ENCODE measurements at regions of chr18 and their contacts with region 1.

Region 1: GRCh38 chr18:13268158-13269012 is 49.8 kb downstream of the LDLRAD4 start:
- DNase-seq: peak in 3 of 5 donors; percentile 21 to 55 (median 45)
- ATAC-seq: no peak
- H3K4me3 ChIP-seq: peak overlapping the region in 1 of 12 donors; percentile 10
- H3K27ac ChIP-seq: peak overlapping the region; percentile 6 to 86 (median 72)
- H3K4me1 ChIP-seq: peaks cover 8 to 100% (median 82%) of the 10 kb centered on the region in 12 donors
- H3K27me3 ChIP-seq: no peaks in the 10 kb centered on the region
- CTCF ChIP-seq: no peak
- POLR2A ChIP-seq: no peak

Region 2: DNA sequence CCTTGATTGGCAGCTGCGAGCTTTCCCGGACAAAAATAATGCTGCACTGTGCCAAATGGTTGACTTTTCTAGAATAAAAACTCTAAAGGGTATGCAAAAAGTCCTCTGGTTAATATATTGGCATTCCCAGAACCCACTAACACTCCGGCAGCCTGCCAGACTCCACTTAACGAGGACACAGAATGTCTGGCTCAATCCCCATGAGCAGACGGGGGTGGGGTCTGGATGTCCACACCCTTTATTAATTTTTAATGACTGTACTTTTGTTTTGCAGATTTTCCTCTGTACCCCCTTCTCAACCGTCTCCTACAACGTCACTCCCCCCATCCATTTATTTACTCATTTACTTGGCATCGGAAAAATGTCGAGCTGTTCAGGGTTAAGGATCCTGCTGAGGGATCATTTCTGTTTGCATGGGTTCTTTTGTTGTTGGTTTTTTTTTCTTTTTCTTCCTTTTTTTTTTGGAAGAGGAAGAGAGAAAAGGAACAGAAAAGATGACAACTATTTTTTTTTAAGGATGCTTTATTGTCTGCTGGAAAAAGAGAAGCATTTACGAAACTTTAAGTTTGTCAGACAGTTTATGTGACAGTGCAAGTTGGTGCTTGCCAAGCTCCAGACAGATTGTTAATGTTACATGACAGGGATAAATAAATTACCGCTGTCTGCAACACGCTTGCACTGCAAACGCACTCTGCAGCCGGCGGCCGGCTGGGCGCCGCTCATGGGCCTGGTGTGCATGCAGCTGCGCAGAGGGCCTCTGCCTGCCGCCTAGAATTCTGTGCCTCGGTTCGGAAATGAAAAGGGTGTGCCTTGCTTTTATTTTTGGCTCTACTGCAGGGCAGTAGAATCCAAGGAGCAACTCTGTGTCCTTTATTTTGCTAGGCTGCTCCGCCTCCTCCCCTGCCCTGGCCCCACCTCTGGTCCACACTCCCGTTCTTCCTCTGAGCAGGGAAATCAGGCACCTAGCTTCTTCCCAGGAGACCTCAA is 46.2 kb before region 1 on chr18:
- intact Hi-C with region 1: loop called (anchors 2 to 10 kb)
- DNase-seq: peak; percentile 77 to 90 (median 84)
- ATAC-seq: peak; percentile 33 to 68 (median 59)
- H3K4me3 ChIP-seq: peak overlapping the region in 10 of 12 donors; percentile 15 to 38 (median 20)
- H3K27ac ChIP-seq: peak overlapping the region; percentile 70 to 95 (median 91)
- H3K4me1 ChIP-seq: peaks cover 14 to 69% (median 58%) of the 10 kb centered on the region in 12 donors
- H3K27me3 ChIP-seq: no peaks in the 10 kb centered on the region
- CTCF ChIP-seq: no peak
- POLR2A ChIP-seq: no peak

Region 3: DNA sequence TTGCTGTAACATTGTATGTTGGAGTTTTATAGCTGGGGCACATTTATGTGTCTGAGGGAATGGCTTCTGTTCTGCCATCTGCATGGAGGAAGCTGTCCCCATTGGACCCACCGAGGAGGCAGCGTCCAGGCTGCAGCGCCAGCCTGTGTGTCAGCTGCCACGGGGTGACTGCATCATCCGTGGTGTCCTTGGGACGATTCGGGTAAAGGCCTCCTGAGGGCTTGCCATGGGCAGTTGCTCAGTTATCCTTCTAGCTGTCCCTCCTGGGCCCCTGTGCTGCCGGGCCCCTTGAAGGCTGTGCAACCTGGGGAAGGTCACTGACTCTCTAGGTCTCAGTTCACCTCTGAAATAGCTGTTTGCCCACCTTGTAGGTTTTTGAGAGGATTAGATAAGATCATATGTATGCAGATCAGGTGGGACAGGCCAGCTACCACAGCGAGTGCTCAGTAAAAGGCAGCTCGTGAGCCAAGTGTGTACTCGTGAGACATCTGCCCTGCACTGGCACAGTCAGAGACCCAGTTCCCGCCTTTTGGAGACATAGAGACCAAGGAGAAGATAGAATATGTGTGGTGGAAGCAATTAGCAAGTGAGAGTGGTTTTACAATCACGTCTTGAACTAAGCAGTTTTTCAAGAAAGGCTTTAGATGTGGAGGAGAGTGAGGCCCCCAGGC is 39.2 kb before region 1 on chr18:
- intact Hi-C with region 1: loop called in 7 of 10 experiments (anchors 5 to 10 kb)
- DNase-seq: no peak
- ATAC-seq: no peak
- H3K4me3 ChIP-seq: no peak overlapping the region
- H3K27ac ChIP-seq: peak overlapping the region in 2 of 12 donors; percentile 7 to 15
- H3K4me1 ChIP-seq: peaks cover 9 to 53% (median 29%) of the 10 kb centered on the region in 12 donors
- H3K27me3 ChIP-seq: no peaks in the 10 kb centered on the region
- CTCF ChIP-seq: no peak
- POLR2A ChIP-seq: no peak

Region 4: GRCh38 chr18:13321923-13322322 is 53.5 kb after region 1 on chr18:
- intact Hi-C with region 1: no loop called
- DNase-seq: no peak
- ATAC-seq: no peak
- H3K4me3 ChIP-seq: no peak overlapping the region
- H3K27ac ChIP-seq: no peak overlapping the region
- H3K4me1 ChIP-seq: peaks cover 0 to 28% (median 9%) of the 10 kb centered on the region in 12 donors
- H3K27me3 ChIP-seq: no peaks in the 10 kb centered on the region
- CTCF ChIP-seq: no peak
- POLR2A ChIP-seq: no peak

Region 5: GRCh38 chr18:13416208-13416607 is 147.8 kb after region 1 on chr18:
- intact Hi-C with region 1: loop called in 1 of 10 experiments (anchors 10 kb)
- DNase-seq: no peak
- ATAC-seq: peak; percentile 17 to 68 (median 34)
- H3K4me3 ChIP-seq: no peak overlapping the region
- H3K27ac ChIP-seq: peak overlapping the region in 9 of 12 donors; percentile 1 to 70 (median 50)
- H3K4me1 ChIP-seq: peaks cover 7 to 65% (median 46%) of the 10 kb centered on the region in 12 donors
- H3K27me3 ChIP-seq: no peaks in the 10 kb centered on the region
- CTCF ChIP-seq: no peak
- POLR2A ChIP-seq: no peak

Region 6: DNA sequence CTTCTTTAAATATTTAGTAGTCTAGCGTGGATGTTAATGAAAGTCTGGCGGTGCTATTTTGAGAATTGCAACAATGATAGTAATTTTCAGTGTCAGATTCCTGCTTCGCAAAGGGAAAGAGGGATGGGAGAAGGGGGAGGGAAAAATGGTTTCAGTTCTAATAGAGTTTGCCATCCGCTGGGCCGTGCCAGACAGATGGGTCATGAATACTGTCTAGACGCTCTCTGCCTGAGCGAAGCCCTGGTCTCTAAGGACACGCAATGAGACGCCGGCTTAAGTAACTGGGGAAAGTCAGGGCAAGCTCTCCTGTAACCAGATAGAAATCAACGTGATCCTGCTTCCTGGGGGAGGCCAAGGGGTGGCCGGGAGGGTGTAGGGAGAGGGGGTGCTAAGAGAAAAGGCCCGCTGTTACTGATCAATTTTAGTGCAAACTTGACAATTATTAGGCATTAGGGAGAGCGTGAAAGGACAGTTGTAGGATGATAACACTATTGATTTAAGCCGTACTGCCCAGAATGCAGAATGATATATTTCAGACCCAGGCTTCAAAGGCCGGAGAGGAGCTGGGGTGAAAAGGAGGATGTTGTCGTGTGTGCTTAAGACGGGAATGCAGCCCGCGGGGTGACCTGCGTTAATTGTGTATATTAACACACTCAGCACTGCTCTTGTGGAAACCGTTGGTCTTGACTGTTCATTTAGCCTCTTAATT is 179.4 kb after region 1 on chr18:
- intact Hi-C with region 1: loop called in 1 of 10 experiments (anchors 10 kb)
- DNase-seq: peak in 3 of 5 donors; percentile 49 to 63 (median 58)
- ATAC-seq: peak in 3 of 4 donors; percentile 31 to 59 (median 39)
- H3K4me3 ChIP-seq: peak overlapping the region in 2 of 12 donors; percentile 0 to 22
- H3K27ac ChIP-seq: peak overlapping the region in 3 of 12 donors; percentile 12 to 51 (median 32)
- H3K4me1 ChIP-seq: peaks cover 0 to 57% (median 27%) of the 10 kb centered on the region in 12 donors
- H3K27me3 ChIP-seq: no peaks in the 10 kb centered on the region
- CTCF ChIP-seq: no peak
- POLR2A ChIP-seq: no peak

Region 7: DNA sequence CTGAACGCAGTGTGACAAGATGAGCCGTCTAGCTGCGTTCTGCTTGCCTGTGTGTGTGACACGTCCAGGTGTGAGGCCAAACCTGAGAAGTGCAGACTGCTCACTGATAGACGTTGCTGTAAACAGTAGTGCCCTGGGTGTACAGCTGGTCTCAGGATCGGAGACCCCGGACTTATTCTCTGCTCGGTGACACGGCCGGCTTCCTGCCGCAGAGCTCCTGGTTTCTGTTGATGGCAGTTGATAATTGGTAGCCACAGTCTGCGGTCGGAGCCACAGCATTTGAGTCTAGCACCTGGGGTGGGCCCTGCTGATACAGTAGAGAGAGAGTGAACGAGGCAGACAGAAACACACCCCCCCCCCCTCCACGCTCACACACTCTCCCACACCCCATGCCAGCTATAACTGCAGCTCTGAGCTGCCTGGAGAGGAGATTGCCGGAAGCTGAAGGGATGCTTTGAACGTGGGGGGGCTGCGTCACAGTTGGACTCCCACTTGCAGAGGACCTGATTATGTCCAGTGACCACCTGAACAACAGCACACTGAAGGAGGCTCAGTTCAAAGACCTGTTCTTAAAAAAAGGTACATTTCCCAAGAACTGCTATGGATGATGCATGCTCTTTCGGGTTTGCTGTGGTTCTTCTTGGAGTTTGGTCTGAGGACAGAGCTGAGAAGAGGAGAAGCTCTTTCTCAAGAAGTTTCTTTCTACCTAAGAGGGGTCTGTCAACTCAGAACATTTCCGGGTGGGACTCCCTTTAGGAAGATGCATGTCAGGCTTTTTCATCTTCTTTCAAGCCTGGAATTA is 344.0 kb after region 1 on chr18:
- intact Hi-C with region 1: no loop called
- DNase-seq: no peak
- ATAC-seq: peak in 3 of 4 donors; percentile 1 to 8 (median 4)
- H3K4me3 ChIP-seq: peak overlapping the region in 11 of 12 donors; percentile 23 to 58 (median 46)
- H3K27ac ChIP-seq: peak overlapping the region; percentile 68 to 93 (median 81)
- H3K4me1 ChIP-seq: peaks cover 3 to 81% (median 43%) of the 10 kb centered on the region in 12 donors
- H3K27me3 ChIP-seq: no peaks in the 10 kb centered on the region
- CTCF ChIP-seq: no peak
- POLR2A ChIP-seq: no peak